Ascending aorta (tissue), 2 donors: ENCODE measurements at regions of chr11 and their contacts with region 1.

Region 1: DNA sequence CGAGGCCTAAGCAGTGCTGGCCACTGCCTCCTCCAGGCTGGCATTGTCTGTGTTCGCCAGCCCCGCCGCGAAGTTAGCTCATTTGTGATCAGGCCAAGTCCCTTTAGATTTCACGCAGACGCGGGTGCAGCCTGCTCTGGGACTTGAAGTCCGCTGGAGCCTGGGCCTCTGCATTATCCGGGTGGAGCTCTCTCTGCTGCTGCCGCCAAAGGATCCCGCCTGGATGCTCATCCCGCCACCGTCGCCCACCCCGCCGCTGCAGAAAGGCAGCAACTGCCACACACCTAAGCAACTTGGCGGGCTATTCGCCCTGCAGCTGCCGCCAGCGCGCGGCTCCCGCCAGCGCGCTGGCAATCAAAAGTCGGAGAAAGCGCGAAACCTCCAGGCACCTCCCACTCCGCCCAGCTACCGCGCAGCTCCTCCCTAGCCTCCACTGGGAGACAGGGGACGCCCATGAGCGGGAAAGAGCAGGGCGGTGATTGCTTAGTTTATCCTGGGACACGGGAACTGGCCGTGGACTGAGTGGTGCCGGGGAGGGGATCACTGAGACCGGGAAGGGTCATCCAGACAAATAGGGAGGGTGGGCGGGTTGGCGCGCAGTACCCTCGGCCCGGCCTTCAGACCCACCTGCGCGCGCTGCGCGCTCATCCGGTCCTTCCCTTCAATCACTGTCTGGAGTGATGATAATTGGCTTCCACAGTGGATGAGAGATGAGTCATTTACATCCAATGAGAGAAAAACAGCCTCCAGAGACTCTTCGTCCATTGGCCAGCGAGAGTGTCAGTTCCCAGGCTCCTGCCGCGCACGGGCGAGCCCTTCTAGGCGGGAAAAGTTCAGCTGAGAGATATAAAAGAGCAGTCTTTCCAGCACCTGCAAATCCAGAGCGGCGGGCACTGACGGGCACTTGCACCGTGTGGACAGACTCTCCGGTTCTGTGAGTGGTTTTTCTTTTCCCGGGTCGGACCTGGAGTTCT is at the start of gene FAM111B:
- DNase-seq: peak; percentile 30 to 86
- H3K4me3 ChIP-seq: peak within 1 kb of the TSS; percentile 40 to 72
- H3K27ac ChIP-seq: peak within 1 kb of the TSS in 1 of 2 donors; percentile 46
- H3K4me1 ChIP-seq: peaks cover 2 to 6% of the 10 kb centered on the region in 2 donors
- H3K27me3 ChIP-seq: no peaks in the 10 kb centered on the region
- CTCF ChIP-seq: no peak
- total RNA-seq, gene FAM111B: not detected

Region 2: GRCh38 chr11:59142530-59143507 is 36.2 kb after region 1 on chr11 and contains the start of gene FAM111A:
- intact Hi-C with region 1: loop called (anchors 2 kb)
- DNase-seq: peak; percentile 70 to 93
- H3K4me3 ChIP-seq: peak within 1 kb of the TSS; percentile 79 to 90
- H3K27ac ChIP-seq: peak within 1 kb of the TSS; percentile 95 to 96
- H3K4me1 ChIP-seq: peaks cover 0 to 9% of the 10 kb centered on the region in 2 donors
- H3K27me3 ChIP-seq: no peaks in the 10 kb centered on the region
- CTCF ChIP-seq: peak in 1 of 3 experiments; percentile 18
- total RNA-seq, gene FAM111A: 54.3 TPM

Region 3: GRCh38 chr11:59243633-59244032 is 137.0 kb after region 1 on chr11:
- intact Hi-C with region 1: no loop called
- DNase-seq: no peak
- H3K4me3 ChIP-seq: no peak overlapping the region
- H3K27ac ChIP-seq: no peak overlapping the region
- H3K4me1 ChIP-seq: no peaks in the 10 kb centered on the region
- H3K27me3 ChIP-seq: no peaks in the 10 kb centered on the region
- CTCF ChIP-seq: no peak

Region 4: DNA sequence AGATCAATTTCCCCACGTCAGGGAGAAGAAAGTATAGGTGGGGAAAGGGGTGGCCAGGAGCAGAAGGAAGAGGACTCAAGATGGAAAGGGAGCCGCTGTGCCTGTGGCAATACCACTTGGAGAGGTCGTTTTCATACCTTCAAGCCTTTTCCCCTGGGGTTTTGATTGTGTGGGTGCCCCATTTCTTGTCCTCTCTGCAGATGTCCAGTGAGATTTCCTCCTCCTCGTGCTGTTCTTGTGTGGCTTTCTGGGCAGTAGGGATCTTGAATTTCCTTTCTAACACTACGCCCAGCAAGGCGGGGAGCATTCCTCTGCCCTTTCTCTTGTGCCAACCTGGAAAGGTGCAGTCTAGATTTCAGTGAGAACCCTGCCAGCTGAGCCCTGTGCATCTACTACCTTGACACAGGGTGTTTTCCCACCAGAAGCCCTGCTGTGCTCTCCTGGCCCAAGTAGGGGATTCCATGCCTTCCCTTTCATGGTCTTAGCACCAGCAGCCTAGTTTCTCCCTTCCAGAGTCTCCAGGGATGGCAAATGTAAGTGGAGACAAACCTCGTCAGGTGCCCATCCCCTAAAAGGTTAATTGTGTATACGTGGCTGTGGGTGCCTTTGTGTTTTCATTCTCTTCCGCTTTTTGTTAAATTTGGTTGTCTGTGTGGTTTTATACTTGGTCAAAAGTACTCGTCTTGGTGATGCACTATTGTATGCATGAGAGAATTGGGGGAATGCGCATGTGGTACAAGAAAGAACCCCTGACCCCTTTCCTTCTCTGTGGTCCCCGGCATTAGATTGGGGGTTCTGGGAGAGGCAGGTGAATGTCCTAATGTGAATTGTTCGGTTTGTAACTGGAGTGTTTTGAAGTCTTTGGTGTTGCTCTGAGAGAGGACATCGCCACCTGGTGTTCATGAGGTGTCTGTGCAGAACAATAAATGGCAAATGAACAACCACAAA is 177.4 kb after region 1 on chr11:
- intact Hi-C with region 1: no loop called
- DNase-seq: no peak
- H3K4me3 ChIP-seq: no peak overlapping the region
- H3K27ac ChIP-seq: no peak overlapping the region
- H3K4me1 ChIP-seq: no peaks in the 10 kb centered on the region
- H3K27me3 ChIP-seq: no peaks in the 10 kb centered on the region
- CTCF ChIP-seq: peak; percentile 59 to 74 (median 73)